Endothelial cell of umbilical vein (primary cell): ENCODE measurements at regions of chr15 and their contacts with region 1.

Region 1: GRCh38 chr15:90648137-90649070 is 68.7 kb upstream of the BLM start:
- DNase-seq: peak; percentile 88
- H3K4me3 ChIP-seq: no peak overlapping the region
- H3K27ac ChIP-seq: peak overlapping the region; percentile 97
- H3K4me1 ChIP-seq: peaks cover 30% of the 10 kb centered on the region
- H3K27me3 ChIP-seq: no peaks in the 10 kb centered on the region
- CTCF ChIP-seq: peak; percentile 70 to 82
- POLR2A ChIP-seq: peak; percentile 50

Region 2: GRCh38 chr15:90489514-90489913 is 158.9 kb before region 1 on chr15:
- CTCF ChIA-PET with region 1: no interaction called
- POLR2A ChIA-PET with region 1: no interaction called
- dilution Hi-C with region 1: no loop called
- intact Hi-C with region 1: no loop called
- DNase-seq: no peak
- H3K4me3 ChIP-seq: no peak overlapping the region
- H3K27ac ChIP-seq: no peak overlapping the region
- H3K4me1 ChIP-seq: no peaks in the 10 kb centered on the region
- H3K27me3 ChIP-seq: no peaks in the 10 kb centered on the region
- CTCF ChIP-seq: no peak
- POLR2A ChIP-seq: no peak

Region 3: DNA sequence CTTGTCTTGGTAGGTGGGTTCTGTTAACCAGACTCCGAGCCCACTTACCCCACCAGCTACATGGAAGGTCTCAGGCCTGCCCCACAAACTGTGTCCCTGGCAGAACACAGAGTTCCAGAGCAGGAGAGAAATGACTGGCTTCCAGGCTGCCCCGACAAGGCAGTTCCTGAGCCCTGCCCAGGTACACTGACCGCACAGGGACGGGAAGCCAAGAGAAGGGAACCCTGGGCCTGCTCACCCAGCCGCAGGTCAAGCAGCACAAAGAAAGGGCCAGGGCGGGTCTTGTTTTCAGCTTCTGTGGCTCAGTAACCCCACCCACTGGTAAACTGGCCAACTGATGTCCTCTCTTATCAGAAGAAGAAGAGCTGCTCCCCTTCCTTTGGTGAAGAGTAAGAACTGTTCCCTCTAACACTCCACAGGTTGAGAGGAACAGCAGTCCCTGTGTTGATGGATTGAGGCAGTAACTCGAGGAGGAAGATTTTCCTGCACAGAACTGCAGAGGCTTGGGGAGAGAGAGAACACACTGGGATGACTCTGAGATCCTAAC is 50.3 kb before region 1 on chr15:
- CTCF ChIA-PET with region 1: no interaction called
- POLR2A ChIA-PET with region 1: no interaction called
- dilution Hi-C with region 1: no loop called
- intact Hi-C with region 1: no loop called
- DNase-seq: peak; percentile 7
- H3K4me3 ChIP-seq: no peak overlapping the region
- H3K27ac ChIP-seq: no peak overlapping the region
- H3K4me1 ChIP-seq: peaks cover 13% of the 10 kb centered on the region
- H3K27me3 ChIP-seq: no peaks in the 10 kb centered on the region
- CTCF ChIP-seq: no peak
- POLR2A ChIP-seq: no peak

Region 4: DNA sequence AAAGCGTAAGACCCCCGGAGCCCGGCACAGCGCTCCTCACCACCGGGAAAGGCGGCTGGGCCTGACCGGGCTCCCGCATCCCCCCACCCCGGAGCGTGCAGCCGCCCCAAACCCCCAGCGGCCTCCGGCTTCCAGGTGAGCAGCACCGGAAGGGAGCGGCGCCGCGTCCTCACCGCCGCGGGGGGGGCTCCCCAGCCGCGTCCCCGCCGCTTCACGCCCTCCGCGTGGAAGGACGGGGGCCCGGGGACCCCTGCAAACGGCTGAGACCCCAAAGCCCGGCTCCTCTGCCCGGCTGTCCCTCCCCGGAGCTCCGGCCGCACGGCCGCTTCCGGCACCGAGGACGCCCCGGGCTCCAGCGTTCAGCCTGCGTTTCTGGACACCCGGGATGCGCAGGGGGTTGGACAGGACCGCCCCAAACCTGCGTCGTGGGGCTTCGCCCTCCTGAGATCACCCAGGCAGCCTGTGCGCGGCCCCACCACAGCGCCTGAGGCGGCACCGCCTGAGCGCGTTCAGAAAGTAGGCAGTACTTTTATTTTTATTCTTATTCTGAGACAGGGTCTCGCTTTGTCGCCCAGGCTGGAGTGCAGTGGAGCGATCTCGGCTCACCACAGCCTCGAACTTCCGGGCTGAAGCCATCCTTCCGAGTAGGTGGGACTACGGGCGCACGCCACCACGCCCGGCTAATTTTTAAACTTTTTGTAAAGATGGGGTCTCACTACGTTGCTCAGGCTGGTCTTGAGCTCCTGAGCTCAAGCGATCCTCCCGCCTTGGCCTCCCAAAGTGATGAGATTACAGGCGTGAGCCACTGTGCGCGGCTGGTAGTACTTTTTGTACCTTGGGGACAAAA is 17.1 kb after region 1 on chr15:
- CTCF ChIA-PET with region 1: interaction called, 13 read pairs
- POLR2A ChIA-PET with region 1: interaction called, 7 read pairs
- dilution Hi-C with region 1: no loop called
- intact Hi-C with region 1: loop called (anchors 1 kb)
- DNase-seq: peak; percentile 19
- H3K4me3 ChIP-seq: peak overlapping the region; percentile 49 to 85 (median 80)
- H3K27ac ChIP-seq: peak overlapping the region; percentile 72
- H3K4me1 ChIP-seq: no peaks in the 10 kb centered on the region
- H3K27me3 ChIP-seq: no peaks in the 10 kb centered on the region
- CTCF ChIP-seq: no peak
- POLR2A ChIP-seq: peak; percentile 37

Region 5: DNA sequence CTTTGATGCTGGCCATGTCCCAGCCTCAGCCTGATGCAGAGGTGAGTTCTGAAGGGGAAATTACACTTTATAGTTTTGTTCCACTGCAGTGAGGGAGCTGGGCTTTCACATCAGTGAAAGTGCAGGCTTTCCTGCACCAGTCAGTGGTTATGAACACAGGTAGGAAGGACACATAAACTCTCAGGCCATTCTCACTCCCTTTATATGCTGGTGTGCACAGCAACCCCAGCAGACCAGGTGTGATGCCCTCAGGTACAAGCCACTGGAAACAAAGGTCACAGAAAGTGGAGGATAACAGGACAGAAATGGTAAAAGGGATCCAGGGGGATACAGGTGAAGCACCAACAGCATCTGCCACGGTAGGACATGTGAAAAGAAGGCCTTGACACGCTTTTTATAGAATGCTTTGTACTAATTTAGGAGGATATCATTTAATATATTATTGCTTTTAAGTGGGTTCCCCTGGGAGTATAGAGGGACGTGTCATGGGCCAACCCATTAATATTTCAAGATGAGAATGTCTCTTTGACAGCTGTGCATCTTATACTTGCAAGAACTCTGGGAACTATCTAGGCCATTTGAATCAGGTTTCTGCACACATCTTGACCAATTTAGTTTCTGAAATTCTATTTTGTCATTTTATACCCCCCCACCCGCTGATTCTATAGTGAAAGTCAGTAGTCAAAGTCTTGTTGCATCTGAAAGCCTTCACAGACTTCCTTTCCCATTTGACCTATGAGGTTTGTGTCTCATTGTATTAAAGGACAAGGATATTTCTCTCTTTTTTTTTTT is 43.8 kb after region 1 on chr15:
- CTCF ChIA-PET with region 1: interaction called, 53 read pairs
- POLR2A ChIA-PET with region 1: no interaction called
- dilution Hi-C with region 1: no loop called
- intact Hi-C with region 1: loop called (anchors 1 kb)
- DNase-seq: no peak
- H3K4me3 ChIP-seq: no peak overlapping the region
- H3K27ac ChIP-seq: no peak overlapping the region
- H3K4me1 ChIP-seq: peaks cover 2% of the 10 kb centered on the region
- H3K27me3 ChIP-seq: no peaks in the 10 kb centered on the region
- CTCF ChIP-seq: no peak
- POLR2A ChIP-seq: no peak

Region 6: DNA sequence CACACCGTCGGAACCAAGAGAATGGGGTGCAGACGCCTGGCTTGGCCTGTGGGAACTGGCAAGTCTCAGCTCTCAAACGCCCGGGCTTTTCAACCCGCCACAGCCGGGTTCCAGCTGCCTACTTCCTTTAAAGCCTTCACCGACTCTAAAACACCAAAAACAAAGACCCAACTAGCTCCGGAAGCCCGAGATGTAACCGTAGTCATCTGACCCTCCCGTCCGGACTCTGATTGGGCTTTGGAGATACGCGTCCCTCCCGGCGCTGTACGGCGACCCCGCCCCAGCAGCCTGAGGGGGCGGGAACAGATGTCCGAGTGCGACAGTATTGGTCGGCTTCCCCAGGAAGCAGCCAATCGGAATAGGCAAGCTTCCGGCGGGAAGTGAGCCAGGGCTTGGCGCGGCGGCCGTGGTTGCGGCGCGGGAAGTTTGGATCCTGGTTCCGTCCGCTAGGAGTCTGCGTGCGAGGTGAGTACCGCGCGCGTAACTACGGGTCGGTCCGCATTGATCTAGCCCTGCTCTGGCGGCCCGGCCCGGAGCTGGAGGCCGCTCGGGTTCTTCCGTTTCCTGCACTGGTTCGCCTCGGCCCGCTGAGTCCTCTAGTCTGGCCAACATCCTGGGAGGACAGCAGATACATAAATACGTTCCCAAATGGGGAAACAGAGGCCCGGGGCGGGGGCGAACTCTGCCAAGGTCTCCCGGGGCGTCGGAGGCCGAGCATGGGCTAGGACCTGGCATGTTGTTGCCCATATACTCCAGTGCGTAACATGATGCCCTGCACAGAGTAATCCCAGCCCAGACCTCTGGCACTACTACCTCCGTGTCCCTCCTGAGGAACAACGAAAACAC is 68.8 kb after region 1 on chr15 and contains the start of gene BLM:
- CTCF ChIA-PET with region 1: interaction called, 7 read pairs
- POLR2A ChIA-PET with region 1: no interaction called
- dilution Hi-C with region 1: no loop called
- intact Hi-C with region 1: loop called (anchors 1 kb)
- DNase-seq: peak; percentile 99
- H3K4me3 ChIP-seq: peak within 1 kb of the TSS; percentile 63 to 93 (median 79)
- H3K27ac ChIP-seq: peak within 1 kb of the TSS; percentile 90
- H3K4me1 ChIP-seq: peaks cover 15% of the 10 kb centered on the region
- H3K27me3 ChIP-seq: no peaks in the 10 kb centered on the region
- CTCF ChIP-seq: peak in 1 of 2 donors; percentile 34
- POLR2A ChIP-seq: peak; percentile 90
- total RNA-seq, gene BLM: 17.3 and 18.6 TPM in 2 replicates

Region 7: DNA sequence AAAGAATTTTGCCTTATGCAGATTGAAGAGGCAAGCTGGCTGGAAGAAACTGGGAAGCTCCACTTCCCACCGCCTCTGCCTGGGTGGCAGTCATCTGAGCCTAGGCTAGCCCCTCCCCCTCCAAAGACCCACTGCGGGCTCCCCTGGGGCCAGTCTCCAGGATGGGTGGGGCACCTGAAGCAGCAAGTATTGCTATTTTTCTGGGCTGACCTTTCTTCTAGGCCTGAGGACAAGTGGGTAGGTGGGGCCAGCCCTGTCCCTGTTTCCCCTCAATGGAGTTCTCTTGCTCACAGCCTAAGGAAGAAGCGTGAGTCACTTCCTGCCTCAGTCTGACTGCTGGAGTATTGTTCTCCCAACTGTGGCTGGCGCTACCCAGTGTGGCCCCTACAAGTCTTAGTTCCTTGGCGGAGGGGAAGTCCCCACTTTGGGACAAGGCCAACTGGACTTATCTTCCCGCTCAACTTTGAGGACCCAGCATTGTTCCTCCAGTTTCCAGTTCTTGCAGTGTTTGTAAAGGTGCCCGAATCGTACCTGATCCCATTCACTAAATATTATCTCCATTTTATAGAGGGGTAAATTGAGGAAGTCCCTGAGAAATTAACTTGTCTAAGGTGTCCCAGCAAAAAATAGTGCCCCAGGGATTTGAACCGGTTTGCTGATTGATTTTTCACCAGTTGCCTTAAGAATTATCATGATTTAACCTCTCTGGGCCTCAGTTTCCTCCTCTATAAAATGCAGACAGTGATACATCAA is 221.4 kb after region 1 on chr15:
- CTCF ChIA-PET with region 1: interaction called, 15 read pairs
- POLR2A ChIA-PET with region 1: no interaction called
- dilution Hi-C with region 1: no loop called
- intact Hi-C with region 1: loop called (anchors 1 kb)
- DNase-seq: peak; percentile 95
- H3K4me3 ChIP-seq: peak overlapping the region in 1 of 3 experiments; percentile 59
- H3K27ac ChIP-seq: peak overlapping the region; percentile 89
- H3K4me1 ChIP-seq: peaks cover 42% of the 10 kb centered on the region
- H3K27me3 ChIP-seq: no peaks in the 10 kb centered on the region
- CTCF ChIP-seq: no peak
- POLR2A ChIP-seq: peak; percentile 80

Region 8: DNA sequence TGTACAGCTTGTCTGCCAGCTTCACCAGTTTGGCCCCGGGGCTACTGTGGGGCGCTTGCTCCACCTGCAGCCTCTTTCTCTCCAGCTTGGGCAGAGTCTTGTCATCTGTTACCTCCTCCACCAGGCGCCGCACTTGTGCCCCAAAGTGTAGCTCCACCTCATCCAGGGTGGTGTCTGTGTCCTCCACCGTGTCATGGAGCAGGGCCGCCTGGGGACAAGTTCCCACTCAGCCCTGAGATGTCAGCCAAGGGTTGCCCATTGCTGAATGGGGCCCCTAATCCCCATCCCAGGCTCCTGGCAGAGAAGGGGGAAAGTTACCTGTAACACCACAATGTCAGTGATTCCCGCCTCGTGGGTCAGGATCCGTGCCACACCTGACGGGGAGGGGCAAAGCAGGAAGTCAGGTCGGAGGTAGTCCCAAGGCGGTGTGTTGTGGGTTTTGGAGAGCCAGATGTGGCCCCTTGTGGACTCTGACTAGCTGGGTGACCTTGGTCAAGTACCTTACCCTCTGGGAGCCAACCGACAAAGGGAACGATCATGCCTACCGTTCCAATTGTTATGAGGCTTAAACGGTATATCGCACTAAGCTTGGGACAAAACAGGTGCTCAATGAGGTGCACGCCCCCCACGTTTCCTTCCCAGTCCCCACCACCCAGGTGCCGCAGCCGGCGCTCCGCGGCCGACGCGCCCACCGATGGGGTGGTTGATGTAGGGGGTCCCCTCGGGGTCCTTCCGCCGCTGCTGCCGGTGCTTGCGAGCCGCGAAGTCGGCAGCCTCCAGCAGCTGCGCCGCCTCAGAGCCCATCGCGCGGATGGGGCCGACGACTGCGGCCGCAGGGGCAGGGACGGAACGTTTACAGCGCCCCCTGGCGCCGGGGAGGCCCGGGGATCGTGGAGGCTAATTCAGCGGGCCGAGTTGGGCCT is 283.6 kb after region 1 on chr15 and contains the start of gene HDDC3:
- CTCF ChIA-PET with region 1: interaction called, 66 read pairs
- POLR2A ChIA-PET with region 1: interaction called, 3 read pairs
- dilution Hi-C with region 1: no loop called
- intact Hi-C with region 1: loop called (anchors 1 kb)
- DNase-seq: peak; percentile 79
- H3K4me3 ChIP-seq: peak within 1 kb of the TSS; percentile 33 to 80 (median 62)
- H3K27ac ChIP-seq: no peak within 1 kb of the TSS
- H3K4me1 ChIP-seq: peaks cover 36% of the 10 kb centered on the region
- H3K27me3 ChIP-seq: no peaks in the 10 kb centered on the region
- CTCF ChIP-seq: peak; percentile 98
- POLR2A ChIP-seq: peak; percentile 74
- total RNA-seq, gene HDDC3: 12.3 and 16.0 TPM in 2 replicates